H1 (cell line): ENCODE measurements at regions of chr4 and their contacts with region 1.

Region 1: GRCh38 chr4:82739316-82740179 is 59.0 kb downstream of the SCD5 start:
- DNase-seq: peak; percentile 61 to 97
- H3K4me3 ChIP-seq: no peak overlapping the region
- H3K27ac ChIP-seq: no peak overlapping the region
- H3K4me1 ChIP-seq: peaks cover 0 to 2% (median 0%) of the 10 kb centered on the region in 4 experiments; a peak in 1 of 7 replicates
- H3K27me3 ChIP-seq: no peaks in the 10 kb centered on the region
- CTCF ChIP-seq: peak; percentile 100
- EP300 ChIP-seq: no peak
- POLR2A ChIP-seq: no peak
- RAD21 ChIP-seq: peak; percentile 100

Region 2: GRCh38 chr4:82450966-82451755 is 288.4 kb before region 1 on chr4:
- CTCF ChIA-PET with region 1: interaction called, 10 read pairs
- POLR2A ChIA-PET with region 1: no interaction called
- DNase-seq: no peak
- H3K4me3 ChIP-seq: no peak overlapping the region
- H3K27ac ChIP-seq: no peak overlapping the region
- H3K4me1 ChIP-seq: peaks cover 0 to 2% (median 0%) of the 10 kb centered on the region in 4 experiments; a peak in 1 of 7 replicates
- H3K27me3 ChIP-seq: no peaks in the 10 kb centered on the region
- CTCF ChIP-seq: no peak
- EP300 ChIP-seq: no peak
- POLR2A ChIP-seq: no peak
- RAD21 ChIP-seq: no peak

Region 3: GRCh38 chr4:82484996-82485783 is 254.4 kb before region 1 on chr4:
- CTCF ChIA-PET with region 1: interaction called, 23 read pairs
- POLR2A ChIA-PET with region 1: no interaction called
- DNase-seq: no peak
- H3K4me3 ChIP-seq: no peak overlapping the region
- H3K27ac ChIP-seq: no peak overlapping the region
- H3K4me1 ChIP-seq: no peaks in the 10 kb centered on the region
- H3K27me3 ChIP-seq: no peaks in the 10 kb centered on the region
- CTCF ChIP-seq: no peak
- EP300 ChIP-seq: no peak
- POLR2A ChIP-seq: no peak
- RAD21 ChIP-seq: no peak

Region 4: DNA sequence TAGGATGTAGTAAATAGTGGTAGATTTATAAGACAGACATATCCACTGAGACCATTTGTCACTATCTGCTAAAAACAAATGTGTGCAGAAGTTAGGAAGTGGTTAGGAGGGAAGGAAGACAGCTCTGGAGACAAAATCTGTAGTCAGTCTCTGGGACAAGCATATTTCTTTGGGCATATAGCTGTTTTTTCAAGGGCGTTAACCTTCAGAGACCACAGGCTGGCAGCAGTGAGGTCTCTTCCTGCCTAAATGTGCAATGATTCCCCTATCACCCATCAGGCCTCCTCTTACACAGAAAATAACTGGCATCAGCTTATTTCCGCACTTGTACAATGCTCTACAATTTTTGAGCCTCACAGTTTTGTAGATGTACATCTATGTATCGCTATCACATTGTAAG is 184.3 kb before region 1 on chr4:
- CTCF ChIA-PET with region 1: interaction called, 26 read pairs
- POLR2A ChIA-PET with region 1: interaction called, 6 read pairs
- DNase-seq: no peak
- H3K4me3 ChIP-seq: no peak overlapping the region
- H3K27ac ChIP-seq: no peak overlapping the region
- H3K4me1 ChIP-seq: no peaks in the 10 kb centered on the region
- H3K27me3 ChIP-seq: no peaks in the 10 kb centered on the region; a peak in 1 of 7 replicates
- CTCF ChIP-seq: peak; percentile 6 to 60 (median 43)
- EP300 ChIP-seq: no peak
- POLR2A ChIP-seq: no peak
- RAD21 ChIP-seq: peak; percentile 51 to 55

Region 5: DNA sequence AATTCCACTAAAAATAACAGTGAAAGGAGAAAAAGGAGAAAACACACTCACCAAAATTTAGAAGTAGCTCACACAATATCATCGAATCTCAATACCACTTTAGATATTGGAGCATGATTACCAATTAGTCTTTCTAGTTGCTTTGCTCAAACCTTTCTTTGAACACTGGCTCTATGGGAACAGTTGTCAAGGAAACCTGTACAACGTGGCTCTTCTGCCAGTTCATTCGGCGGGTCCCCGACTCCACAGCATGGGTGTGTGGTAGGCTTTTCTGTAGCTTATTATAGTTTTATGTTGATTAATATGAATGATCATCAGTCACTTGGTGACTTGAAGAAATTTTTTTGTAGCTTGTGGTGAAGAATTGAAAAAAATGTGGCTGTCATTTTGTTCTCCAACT is 127.6 kb before region 1 on chr4:
- CTCF ChIA-PET with region 1: interaction called, 16 read pairs
- POLR2A ChIA-PET with region 1: no interaction called
- DNase-seq: no peak
- H3K4me3 ChIP-seq: no peak overlapping the region
- H3K27ac ChIP-seq: no peak overlapping the region
- H3K4me1 ChIP-seq: no peaks in the 10 kb centered on the region
- H3K27me3 ChIP-seq: no peaks in the 10 kb centered on the region
- CTCF ChIP-seq: no peak
- EP300 ChIP-seq: no peak
- POLR2A ChIP-seq: no peak
- RAD21 ChIP-seq: no peak

Region 6: DNA sequence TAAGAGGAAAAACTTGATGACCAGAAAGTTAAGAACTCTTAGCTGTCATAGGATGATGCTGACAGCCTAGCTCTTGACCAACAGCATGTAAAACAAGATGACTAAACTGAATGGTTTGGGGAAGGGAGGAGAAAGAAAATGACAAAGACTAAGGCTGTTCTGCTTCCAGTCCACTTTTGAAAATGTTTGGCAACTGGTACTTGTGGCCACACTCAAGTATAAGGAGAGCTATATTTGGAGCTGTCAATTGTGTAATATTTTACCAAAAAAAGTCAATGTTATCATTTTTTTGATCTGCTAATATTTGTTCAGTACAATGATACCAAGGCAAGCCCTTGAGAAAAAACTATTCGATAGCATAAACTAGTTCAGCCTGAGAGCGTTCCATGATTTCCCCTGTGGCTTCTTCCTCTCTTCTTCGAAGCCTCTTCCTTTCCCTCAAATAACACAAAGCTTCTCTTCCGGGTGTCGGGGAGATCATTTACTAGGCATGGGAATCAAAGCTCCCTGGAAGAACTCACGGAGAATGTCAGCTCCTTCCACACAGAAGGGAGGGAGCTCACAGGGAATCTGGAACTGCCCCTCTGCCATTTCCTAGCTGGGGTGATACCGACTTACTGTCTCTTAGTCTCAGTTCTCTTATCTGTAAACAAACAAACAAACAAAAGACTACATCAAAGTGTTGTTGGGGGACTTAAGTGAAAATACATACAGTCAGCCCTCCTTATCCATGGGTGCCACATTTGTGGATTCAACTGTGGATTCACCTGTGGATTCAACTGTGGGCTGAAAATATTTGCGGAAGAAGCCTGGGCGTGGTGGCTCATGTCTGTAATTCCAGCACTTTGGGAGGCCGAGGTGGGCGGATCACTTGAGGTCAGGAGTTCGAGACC is 23.6 kb before region 1 on chr4:
- CTCF ChIA-PET with region 1: interaction called, 31 read pairs
- POLR2A ChIA-PET with region 1: interaction called, 3 read pairs
- DNase-seq: no peak
- H3K4me3 ChIP-seq: no peak overlapping the region
- H3K27ac ChIP-seq: no peak overlapping the region
- H3K4me1 ChIP-seq: peaks cover 0 to 3% (median 0%) of the 10 kb centered on the region in 4 experiments; a peak in 1 of 7 replicates
- H3K27me3 ChIP-seq: no peaks in the 10 kb centered on the region
- CTCF ChIP-seq: no peak
- EP300 ChIP-seq: no peak
- POLR2A ChIP-seq: no peak
- RAD21 ChIP-seq: no peak

Region 7: GRCh38 chr4:82774711-82775171 is 35.2 kb after region 1 on chr4:
- CTCF ChIA-PET with region 1: interaction called, 21 read pairs
- POLR2A ChIA-PET with region 1: interaction called, 3 read pairs
- DNase-seq: no peak
- H3K4me3 ChIP-seq: no peak overlapping the region
- H3K27ac ChIP-seq: no peak overlapping the region
- H3K4me1 ChIP-seq: no peaks in the 10 kb centered on the region
- H3K27me3 ChIP-seq: peaks cover 0 to 10% (median 4%) of the 10 kb centered on the region in 4 experiments; a peak in 5 of 7 replicates
- CTCF ChIP-seq: no peak
- EP300 ChIP-seq: no peak
- POLR2A ChIP-seq: no peak
- RAD21 ChIP-seq: no peak

Region 8: DNA sequence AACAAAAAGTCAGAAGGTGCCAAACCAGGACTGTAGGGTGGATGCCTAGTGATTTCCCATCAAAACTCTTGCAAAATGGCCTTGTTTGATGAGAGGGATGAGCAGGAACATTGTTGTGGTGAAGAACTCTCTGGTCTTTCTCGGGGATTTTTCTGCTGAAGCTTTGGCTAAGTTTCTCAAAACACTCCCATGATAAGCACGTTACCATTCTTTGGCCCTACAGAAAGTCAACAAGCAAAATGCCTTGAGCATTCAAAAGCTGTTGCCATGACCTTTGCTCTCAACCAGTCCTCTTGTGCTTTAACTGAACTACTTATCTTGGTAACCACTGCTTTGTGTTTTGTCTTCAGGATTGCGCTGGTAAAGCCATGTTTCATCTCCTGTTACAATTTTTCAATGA is 154.4 kb after region 1 on chr4:
- CTCF ChIA-PET with region 1: no interaction called
- POLR2A ChIA-PET with region 1: no interaction called
- DNase-seq: no peak
- H3K4me3 ChIP-seq: no peak overlapping the region
- H3K27ac ChIP-seq: no peak overlapping the region
- H3K4me1 ChIP-seq: peaks cover 0 to 3% (median 2%) of the 10 kb centered on the region in 4 experiments; a peak in 2 of 7 replicates
- H3K27me3 ChIP-seq: no peaks in the 10 kb centered on the region
- CTCF ChIP-seq: no peak
- EP300 ChIP-seq: no peak
- POLR2A ChIP-seq: 0 out of 3 replicates have a peak, but pooled peaks of 1 of the 2 experiments have one; percentile 29
- RAD21 ChIP-seq: no peak

Region 9: GRCh38 chr4:82905205-82905604 is 165.7 kb after region 1 on chr4:
- CTCF ChIA-PET with region 1: no interaction called
- POLR2A ChIA-PET with region 1: no interaction called
- DNase-seq: no peak
- H3K4me3 ChIP-seq: no peak overlapping the region
- H3K27ac ChIP-seq: no peak overlapping the region
- H3K4me1 ChIP-seq: no peaks in the 10 kb centered on the region
- H3K27me3 ChIP-seq: no peaks in the 10 kb centered on the region
- CTCF ChIP-seq: no peak
- EP300 ChIP-seq: no peak
- POLR2A ChIP-seq: no peak
- RAD21 ChIP-seq: no peak